Heart left ventricle (tissue), 16 donors: ENCODE measurements at regions of chr14 and their contacts with region 1.

Region 1: GRCh38 chr14:21092273-21093011 is 6.0 kb downstream of the ZNF219 start:
- DNase-seq: peak; percentile 81 to 95 (median 86)
- ATAC-seq: peak; percentile 43 to 87 (median 76)
- H3K4me3 ChIP-seq: peak overlapping the region in 1 of 12 donors; percentile 3
- H3K27ac ChIP-seq: peak overlapping the region in 2 of 12 donors; percentile 21 to 24
- H3K4me1 ChIP-seq: peaks cover 0 to 34% (median 11%) of the 10 kb centered on the region in 12 donors
- H3K27me3 ChIP-seq: no peaks in the 10 kb centered on the region
- CTCF ChIP-seq: peak in 11 of 12 donors; percentile 99 to 100 (median 100)
- POLR2A ChIP-seq: peak in 1 of 2 donors; percentile 22

Region 2: GRCh38 chr14:20714593-20715250 is 377.7 kb before region 1 on chr14:
- intact Hi-C with region 1: no loop called
- DNase-seq: peak; percentile 65 to 87 (median 74)
- ATAC-seq: peak; percentile 78 to 92 (median 87)
- H3K4me3 ChIP-seq: no peak overlapping the region
- H3K27ac ChIP-seq: peak overlapping the region in 6 of 12 donors; percentile 28 to 91 (median 60)
- H3K4me1 ChIP-seq: peaks cover 0 to 11% (median 0%) of the 10 kb centered on the region in 12 donors
- H3K27me3 ChIP-seq: no peaks in the 10 kb centered on the region
- CTCF ChIP-seq: no peak
- POLR2A ChIP-seq: no peak

Region 3: GRCh38 chr14:21014761-21015190 is 77.7 kb before region 1 on chr14:
- intact Hi-C with region 1: loop called in 8 of 10 experiments (anchors 1 to 5 kb)
- DNase-seq: peak; percentile 82 to 85 (median 84)
- ATAC-seq: peak; percentile 58 to 85 (median 82)
- H3K4me3 ChIP-seq: no peak overlapping the region
- H3K27ac ChIP-seq: peak overlapping the region in 4 of 12 donors; percentile 9 to 28 (median 22)
- H3K4me1 ChIP-seq: peaks cover 0 to 27% (median 7%) of the 10 kb centered on the region in 12 donors
- H3K27me3 ChIP-seq: no peaks in the 10 kb centered on the region
- CTCF ChIP-seq: peak; percentile 86 to 99 (median 96)
- POLR2A ChIP-seq: no peak

Region 4: GRCh38 chr14:21024585-21025370 is 67.7 kb before region 1 on chr14 and contains the start of gene NDRG2:
- intact Hi-C with region 1: loop called in 4 of 10 experiments (anchors 5 kb)
- DNase-seq: peak; percentile 88 to 93 (median 90)
- ATAC-seq: peak; percentile 70 to 90 (median 84)
- H3K4me3 ChIP-seq: peak within 1 kb of the TSS; percentile 66 to 98 (median 88)
- H3K27ac ChIP-seq: peak within 1 kb of the TSS; percentile 82 to 100 (median 98)
- H3K4me1 ChIP-seq: peaks cover 0 to 49% (median 30%) of the 10 kb centered on the region in 12 donors
- H3K27me3 ChIP-seq: peaks cover 0 to 7% (median 0%) of the 10 kb centered on the region in 9 donors
- CTCF ChIP-seq: no peak
- POLR2A ChIP-seq: peak in 1 of 2 donors; percentile 74
- total RNA-seq, gene NDRG2: 187 to 661 (median 301) TPM

Region 5: DNA sequence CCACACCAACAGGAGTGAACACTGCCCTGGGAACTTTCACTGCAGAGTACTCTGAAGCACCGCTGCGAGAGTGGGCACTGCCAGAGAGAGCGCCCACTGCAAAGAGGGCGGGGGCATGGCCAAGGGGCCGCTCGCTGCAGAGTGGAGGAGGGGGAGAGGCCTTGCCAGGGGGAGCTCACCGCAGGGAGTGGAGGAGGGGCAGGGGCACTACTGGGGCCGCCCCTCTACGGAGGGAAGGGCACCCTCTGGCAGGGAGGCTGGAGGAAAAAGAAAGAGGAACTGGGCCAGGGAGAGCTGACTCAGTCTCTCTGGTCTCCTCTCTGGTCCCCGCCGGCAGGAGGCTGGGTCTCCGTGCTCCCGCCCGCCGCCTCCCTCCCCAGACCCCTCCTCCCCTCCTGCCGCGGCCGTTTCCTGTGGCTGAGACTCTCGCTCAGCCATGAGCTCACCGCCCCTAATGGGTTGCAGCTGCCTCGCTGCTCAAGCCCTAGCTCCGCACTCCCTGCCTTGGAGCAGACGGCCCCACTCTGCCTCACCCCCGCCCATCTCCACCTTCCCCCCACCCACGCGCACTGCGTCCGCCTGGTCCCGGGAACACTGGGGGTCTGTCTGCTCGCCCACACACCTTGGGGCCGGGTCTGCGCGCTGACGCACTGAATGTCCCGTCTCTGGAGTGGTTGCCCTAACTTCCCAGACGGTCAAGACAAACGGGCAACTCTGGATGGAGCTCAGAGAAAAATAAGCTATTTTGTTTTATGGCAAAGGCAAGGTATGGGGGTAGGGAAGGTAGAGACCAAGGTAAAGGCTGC is 21.0 kb before region 1 on chr14:
- intact Hi-C with region 1: loop called in 7 of 10 experiments (anchors 1 to 2 kb)
- DNase-seq: peak; percentile 90 to 95 (median 92)
- ATAC-seq: peak; percentile 69 to 81 (median 74)
- H3K4me3 ChIP-seq: peak overlapping the region; percentile 68 to 99 (median 82)
- H3K27ac ChIP-seq: peak overlapping the region; percentile 86 to 99 (median 92)
- H3K4me1 ChIP-seq: peaks cover 0 to 40% (median 28%) of the 10 kb centered on the region in 12 donors
- H3K27me3 ChIP-seq: peaks cover 0 to 6% (median 0%) of the 10 kb centered on the region in 9 donors
- CTCF ChIP-seq: peak in 1 of 12 donors; percentile 20
- POLR2A ChIP-seq: peak in 1 of 2 donors; percentile 39